Aorta (tissue), 5 donors: ENCODE measurements at regions of chrX and their contacts with region 1.

Region 1: DNA sequence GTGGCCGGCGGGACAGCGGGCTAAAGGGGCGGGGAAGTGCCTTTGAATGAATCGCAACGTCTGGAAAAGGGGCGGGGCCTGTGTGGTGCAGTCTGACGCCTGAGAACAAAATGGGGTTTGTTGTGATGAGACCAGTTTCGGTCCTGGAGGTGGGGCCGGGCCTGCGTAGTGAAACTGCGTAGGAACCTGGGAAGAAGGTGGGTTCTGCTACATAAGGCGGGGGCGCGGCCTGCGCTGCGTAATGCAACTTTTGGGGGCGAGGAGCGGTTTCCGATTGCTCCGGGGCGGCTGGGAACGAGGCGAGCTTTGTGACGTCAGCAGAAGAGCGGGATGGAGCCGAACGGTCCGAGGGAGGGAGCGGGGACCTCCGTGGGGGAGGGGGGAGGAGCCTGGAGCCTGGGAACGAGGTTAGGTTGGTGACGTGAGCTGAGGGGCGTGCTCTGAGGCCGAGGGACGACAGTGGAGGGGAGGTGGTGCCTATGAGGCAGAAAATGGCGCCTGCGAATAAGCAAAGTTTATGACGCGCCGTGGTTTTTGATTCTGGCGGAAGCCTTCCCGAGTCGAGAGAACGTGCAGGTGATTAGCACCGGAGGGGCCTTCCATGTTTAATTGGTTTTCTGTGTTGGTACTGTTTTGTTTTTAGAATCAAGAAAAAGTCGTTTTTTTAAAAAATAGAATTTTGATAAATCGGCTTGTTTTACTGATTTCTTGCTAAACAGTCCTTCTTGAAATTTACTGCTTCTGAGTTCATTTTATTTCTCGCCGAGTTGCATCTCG is 716 bp downstream of the USP11 start:
- DNase-seq: peak; percentile 96 to 97
- ATAC-seq: peak; percentile 94
- H3K4me3 ChIP-seq: peak overlapping the region; percentile 45 to 82
- H3K27ac ChIP-seq: peak overlapping the region; percentile 43 to 58
- H3K4me1 ChIP-seq: no peaks in the 10 kb centered on the region
- H3K27me3 ChIP-seq: no peaks in the 10 kb centered on the region

Region 2: DNA sequence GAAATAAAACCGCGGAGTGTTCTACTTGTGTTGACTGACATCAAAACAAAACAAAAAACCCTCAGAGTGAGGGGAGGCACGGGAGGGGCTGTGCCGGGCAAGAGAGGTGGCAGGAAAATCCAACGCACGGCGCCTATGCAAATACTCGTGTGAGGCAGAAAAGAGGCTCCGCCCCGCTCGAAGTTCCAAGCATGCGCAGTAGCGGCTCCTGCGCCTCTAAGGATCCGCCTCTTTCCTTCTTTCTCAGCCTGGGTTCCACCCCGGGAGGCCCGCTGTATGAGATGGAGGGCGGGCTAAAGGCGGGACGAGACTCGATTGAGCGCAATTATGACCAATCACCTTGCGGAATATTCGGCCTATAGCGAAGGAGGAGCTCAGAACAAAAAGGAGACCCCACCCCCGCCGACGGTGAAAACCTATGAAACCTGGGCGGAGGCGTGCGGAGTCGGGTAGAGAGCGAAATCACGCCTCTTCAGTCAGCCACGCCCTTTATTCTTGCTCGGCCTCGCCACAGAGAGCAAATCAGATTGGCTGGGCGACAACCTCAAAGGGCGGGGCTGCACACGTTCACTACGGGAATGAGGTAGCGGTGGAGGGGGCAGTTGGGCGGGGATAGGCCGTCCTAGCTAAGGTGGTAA is 15.8 kb before region 1 on chrX:
- intact Hi-C with region 1: loop called in 1 of 2 experiments (anchors 1 kb)
- DNase-seq: peak; percentile 99
- ATAC-seq: peak; percentile 95
- H3K4me3 ChIP-seq: peak overlapping the region; percentile 0 to 69
- H3K27ac ChIP-seq: peak overlapping the region in 1 of 2 donors; percentile 69
- H3K4me1 ChIP-seq: no peaks in the 10 kb centered on the region
- H3K27me3 ChIP-seq: no peaks in the 10 kb centered on the region

Region 3: DNA sequence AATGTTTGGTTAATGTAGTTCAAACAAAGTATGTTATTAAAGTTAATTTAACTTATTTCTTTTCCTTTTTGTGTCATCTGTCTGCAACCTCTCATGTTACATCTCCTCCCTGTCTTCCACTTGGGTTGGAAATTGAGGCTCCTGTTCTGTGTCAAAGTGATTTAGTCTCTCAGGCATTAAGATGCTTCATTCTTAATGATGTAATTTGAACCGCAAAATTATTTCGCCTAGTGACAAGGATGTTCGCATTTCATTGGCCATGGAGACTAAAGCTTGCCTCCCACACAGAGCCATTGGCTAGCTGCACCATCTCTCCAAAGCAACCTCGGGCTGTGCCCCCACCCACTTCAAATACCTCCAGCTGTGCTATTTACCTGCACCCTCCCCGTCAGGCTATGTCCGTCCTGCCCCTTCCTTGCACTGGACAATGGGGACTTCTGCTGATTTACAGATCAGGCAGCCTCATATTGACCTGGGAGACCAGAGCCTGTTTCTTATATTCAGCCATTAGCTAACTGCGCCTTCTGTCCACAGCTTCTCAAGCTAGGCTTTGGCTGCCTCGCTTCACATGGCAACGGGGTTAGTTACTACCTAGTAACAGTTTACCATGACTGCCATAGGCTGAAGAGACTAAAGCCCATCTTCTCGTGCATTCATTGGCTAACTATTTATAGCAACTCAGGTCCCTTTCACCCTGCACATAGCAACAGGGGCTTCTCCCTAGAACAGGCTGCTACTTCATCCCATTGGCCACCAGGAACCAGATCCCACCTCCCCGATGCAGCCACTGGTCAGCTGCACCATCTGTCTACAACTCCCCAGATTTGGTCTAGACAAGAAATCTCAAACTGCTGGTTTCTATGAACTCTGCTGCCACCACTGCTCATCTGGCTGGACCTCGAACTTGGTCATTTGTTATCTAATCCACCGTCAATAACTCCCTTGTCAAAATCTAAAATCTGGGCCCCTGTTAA is 128.3 kb after region 1 on chrX:
- intact Hi-C with region 1: loop called in 1 of 2 experiments (anchors 5 kb)
- DNase-seq: peak; percentile 85 to 90
- ATAC-seq: peak; percentile 93
- H3K4me3 ChIP-seq: no peak overlapping the region
- H3K27ac ChIP-seq: peak overlapping the region; percentile 22 to 78
- H3K4me1 ChIP-seq: no peaks in the 10 kb centered on the region
- H3K27me3 ChIP-seq: no peaks in the 10 kb centered on the region